Heart left ventricle (tissue), 16 donors: ENCODE measurements at regions of chr3 and their contacts with region 1.

Region 1: DNA sequence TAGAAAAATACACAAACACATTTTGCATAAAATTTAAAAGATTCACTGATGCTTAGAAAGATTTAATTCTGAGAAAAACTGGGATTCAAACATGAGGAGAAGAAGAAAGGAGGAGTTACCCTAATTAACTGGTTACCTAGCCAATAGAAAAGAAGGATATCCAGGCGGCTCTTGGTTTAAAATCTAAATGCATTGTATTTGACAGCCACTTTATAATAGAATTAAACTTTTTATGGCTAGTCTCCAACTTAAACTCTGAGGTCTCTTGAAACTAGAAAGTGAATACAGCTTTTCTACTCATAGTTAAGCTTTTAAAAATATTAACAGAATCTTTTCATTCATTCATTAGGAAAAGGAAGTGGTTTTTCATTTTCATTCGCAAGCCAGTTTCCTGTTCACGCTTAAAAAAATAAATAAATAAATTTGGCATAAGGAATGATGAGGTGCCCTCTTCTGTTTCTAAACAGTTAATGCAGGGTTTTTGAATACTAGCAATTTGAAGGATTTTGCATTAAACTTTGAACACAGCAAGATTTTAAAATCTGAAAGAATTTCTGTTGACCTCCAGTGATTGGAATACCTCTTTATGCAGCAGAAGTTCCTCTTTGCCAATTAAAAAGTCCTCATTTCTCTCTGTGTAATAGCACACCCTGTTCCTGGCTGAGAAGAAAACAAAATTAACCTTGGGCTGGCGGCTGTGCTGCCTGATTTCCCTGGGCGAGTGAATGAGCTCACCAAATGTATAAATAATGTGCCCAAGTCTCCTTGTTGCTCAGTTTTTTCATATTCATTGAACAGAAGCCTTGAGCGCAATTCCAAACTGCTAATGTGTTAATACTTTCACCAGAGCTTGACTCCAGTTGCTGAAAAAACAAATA is 105.1 kb downstream of the ZMAT3 start:
- DNase-seq: no peak
- ATAC-seq: peak in 3 of 4 donors; percentile 41 to 74 (median 70)
- H3K4me3 ChIP-seq: peak overlapping the region in 5 of 12 donors; percentile 0 to 35 (median 23)
- H3K27ac ChIP-seq: peak overlapping the region in 2 of 12 donors; percentile 35 to 52
- H3K4me1 ChIP-seq: peaks cover 0 to 20% (median 9%) of the 10 kb centered on the region in 12 donors
- H3K27me3 ChIP-seq: no peaks in the 10 kb centered on the region
- CTCF ChIP-seq: peak; percentile 31 to 70 (median 59)
- POLR2A ChIP-seq: no peak

Region 2: GRCh38 chr3:178436773-178437172 is 529.8 kb before region 1 on chr3:
- intact Hi-C with region 1: loop called (anchors 2 to 5 kb)
- DNase-seq: no peak
- ATAC-seq: peak in 1 of 4 donors; percentile 31
- H3K4me3 ChIP-seq: no peak overlapping the region
- H3K27ac ChIP-seq: no peak overlapping the region
- H3K4me1 ChIP-seq: peaks cover 0 to 9% (median 1%) of the 10 kb centered on the region in 12 donors
- H3K27me3 ChIP-seq: no peaks in the 10 kb centered on the region
- CTCF ChIP-seq: peak; percentile 42 to 68 (median 55)
- POLR2A ChIP-seq: no peak

Region 3: DNA sequence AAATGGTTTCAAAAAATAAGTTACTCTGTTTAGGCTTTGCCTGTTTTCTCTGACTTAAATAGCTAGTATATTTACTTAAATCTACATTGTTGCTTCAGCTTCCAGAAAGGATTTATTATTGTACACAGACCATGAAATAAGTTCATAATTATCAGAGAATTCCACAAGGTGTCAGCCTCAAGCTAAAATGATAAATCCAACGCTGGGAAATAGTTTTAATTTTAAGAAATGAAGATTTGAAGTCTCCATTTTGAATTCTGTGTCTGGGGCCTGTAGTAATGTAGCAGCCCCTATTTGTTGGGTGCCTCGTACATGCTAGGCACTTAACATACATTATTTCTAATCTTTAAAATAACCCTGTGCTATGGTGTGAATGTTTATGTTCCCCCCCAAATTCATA is 522.9 kb before region 1 on chr3:
- intact Hi-C with region 1: loop called in 8 of 10 experiments (anchors 5 kb)
- DNase-seq: no peak
- ATAC-seq: peak in 1 of 4 donors; percentile 20
- H3K4me3 ChIP-seq: no peak overlapping the region
- H3K27ac ChIP-seq: no peak overlapping the region
- H3K4me1 ChIP-seq: no peaks in the 10 kb centered on the region
- H3K27me3 ChIP-seq: no peaks in the 10 kb centered on the region
- CTCF ChIP-seq: peak in 6 of 12 donors; percentile 13 to 50 (median 31)
- POLR2A ChIP-seq: no peak

Region 4: DNA sequence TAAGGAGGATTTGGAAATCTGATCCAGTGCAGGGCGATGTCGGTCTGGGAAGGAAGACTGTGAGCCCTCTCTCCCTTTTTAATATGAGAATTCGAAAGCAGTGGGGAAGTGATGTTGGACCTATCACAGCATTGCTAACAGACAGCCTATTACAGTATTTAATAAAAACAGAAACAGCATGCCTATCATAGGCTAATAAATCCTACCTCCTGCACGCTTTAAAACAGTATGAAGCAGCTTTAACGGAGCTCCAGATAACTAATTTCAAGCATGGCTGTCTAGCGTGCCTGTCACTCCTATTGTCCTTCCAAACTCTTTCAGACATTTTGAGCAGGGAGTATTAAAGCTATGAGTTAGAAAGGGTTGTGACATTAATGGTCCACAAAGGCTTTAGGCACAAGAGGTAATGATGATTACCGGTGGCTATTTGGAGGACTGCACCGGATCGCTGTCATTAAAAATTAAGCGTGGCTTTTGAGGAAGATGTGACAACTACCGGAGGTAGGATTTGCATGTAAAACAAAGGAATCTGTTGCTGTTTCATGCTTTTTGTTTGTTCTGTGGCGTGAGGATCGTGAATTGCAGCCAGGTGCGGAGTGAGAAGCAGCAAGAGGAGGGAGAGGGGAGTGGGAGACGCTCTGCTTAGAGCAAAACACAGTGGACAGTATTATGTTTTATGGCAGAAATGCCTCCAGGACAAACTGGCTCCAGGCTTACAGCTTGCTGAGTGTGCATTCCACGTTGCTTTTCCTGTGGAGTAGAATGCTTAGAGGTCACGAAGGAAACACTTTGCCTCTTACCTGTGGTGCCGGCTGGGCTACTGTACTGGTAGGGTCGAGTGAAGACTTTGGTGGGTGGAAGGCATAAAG is 430.1 kb before region 1 on chr3 and contains the start of gene KCNMB2:
- intact Hi-C with region 1: loop called in 1 of 10 experiments (anchors 10 kb)
- DNase-seq: no peak
- ATAC-seq: peak; percentile 71 to 88 (median 84)
- H3K4me3 ChIP-seq: peak within 1 kb of the TSS; percentile 38 to 64 (median 52)
- H3K27ac ChIP-seq: peak within 1 kb of the TSS in 7 of 12 donors; percentile 0 to 53 (median 44)
- H3K4me1 ChIP-seq: peaks cover 0 to 6% (median 0%) of the 10 kb centered on the region in 12 donors
- H3K27me3 ChIP-seq: peaks cover 0 to 7% (median 0%) of the 10 kb centered on the region in 9 donors
- CTCF ChIP-seq: no peak
- POLR2A ChIP-seq: no peak
- total RNA-seq, gene KCNMB2: 1.3 to 5.7 (median 2.7) TPM in 8 of 9 donors, not detected in the other

Region 5: GRCh38 chr3:178663201-178663934 is 303.2 kb before region 1 on chr3:
- intact Hi-C with region 1: loop called in 1 of 10 experiments (anchors 10 kb)
- DNase-seq: no peak
- ATAC-seq: no peak
- H3K4me3 ChIP-seq: no peak overlapping the region
- H3K27ac ChIP-seq: peak overlapping the region in 2 of 12 donors; percentile 0 to 76
- H3K4me1 ChIP-seq: peaks cover 0 to 35% (median 3%) of the 10 kb centered on the region in 12 donors
- H3K27me3 ChIP-seq: no peaks in the 10 kb centered on the region
- CTCF ChIP-seq: no peak
- POLR2A ChIP-seq: no peak